Activated CD4-positive, alpha-beta T cell treated with anti-CD3 and anti-CD28 coated beads for 36 hours (primary cell): ENCODE measurements at regions of chr15 and their contacts with region 1.

Region 1: DNA sequence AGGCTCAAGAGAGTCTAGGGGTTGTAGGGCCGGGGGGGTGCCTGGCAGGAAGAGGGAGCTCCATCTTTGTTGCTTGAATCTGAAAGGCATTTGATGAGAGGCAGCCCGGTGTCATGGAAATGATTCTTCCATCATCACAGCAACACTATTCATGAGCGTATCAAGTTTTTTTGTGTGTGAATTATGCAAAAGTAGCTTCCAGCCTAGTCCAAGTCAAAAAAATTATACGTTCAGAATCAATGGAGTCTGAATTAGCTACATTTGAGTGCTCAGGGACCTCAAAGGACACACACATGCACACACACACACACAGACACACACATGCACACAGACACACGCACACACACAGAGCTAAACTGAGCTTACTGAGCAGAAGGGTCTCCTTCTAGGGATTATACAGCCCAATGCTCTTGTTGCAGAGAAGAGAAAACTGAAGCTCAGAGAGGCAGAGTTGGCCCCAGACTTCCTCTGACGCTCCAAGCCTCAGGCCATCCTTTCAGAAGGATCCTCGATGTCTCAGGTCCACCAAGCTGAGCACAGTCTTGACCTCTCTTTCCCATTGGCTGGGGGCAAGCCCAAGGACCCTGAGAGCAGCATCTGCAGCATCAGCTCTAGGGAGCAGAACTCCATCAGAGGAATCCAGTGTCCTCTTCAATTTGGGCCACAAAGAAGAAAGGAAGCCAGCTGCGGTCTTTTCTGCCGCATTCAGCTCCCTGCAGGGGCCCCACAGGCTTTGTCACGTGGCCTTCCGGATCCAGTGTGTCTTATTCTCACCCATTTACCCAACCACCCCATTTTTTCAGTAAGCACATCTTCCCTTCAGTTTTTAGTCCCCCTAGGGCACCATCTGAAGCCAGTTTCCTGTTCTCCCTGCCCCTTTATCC is 228.0 kb downstream of the UACA start:
- DNase-seq: peak; percentile 80
- ATAC-seq: peak; percentile 84
- H3K4me3 Mint-ChIP-seq: peak overlapping the region; percentile 79
- H3K27ac Mint-ChIP-seq: peak overlapping the region; percentile 92
- H3K4me1 Mint-ChIP-seq: peaks cover 48% of the 10 kb centered on the region
- H3K27me3 Mint-ChIP-seq: no peaks in the 10 kb centered on the region

Region 2: DNA sequence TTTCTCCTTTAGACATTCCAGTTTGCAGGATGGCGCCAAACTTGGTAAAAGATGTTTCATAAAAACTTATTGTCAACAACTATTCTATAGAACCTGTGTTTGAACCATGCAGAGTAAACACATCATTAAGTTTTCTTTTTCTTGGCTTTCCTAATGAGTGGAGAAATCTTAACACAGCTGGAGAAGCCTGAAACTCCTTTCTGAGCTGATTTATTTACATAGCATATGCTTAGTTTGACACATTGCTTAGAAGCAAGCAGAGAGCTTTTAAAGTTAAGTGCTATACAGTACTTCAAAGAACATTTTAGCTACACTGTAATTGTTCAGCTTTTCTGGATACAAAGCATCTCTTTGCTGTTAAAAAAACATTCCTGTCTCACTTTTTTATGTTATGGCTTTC is 1297.6 kb before region 1 on chr15:
- CTCF ChIA-PET with region 1: no interaction called
- POLR2A ChIA-PET with region 1: no interaction called
- intact Hi-C with region 1: no loop called
- DNase-seq: no peak
- ATAC-seq: no peak
- H3K4me3 Mint-ChIP-seq: no peak overlapping the region
- H3K27ac Mint-ChIP-seq: no peak overlapping the region
- H3K4me1 Mint-ChIP-seq: no peaks in the 10 kb centered on the region
- H3K27me3 Mint-ChIP-seq: no peaks in the 10 kb centered on the region

Region 3: GRCh38 chr15:70559265-70560239 is 24.2 kb after region 1 on chr15:
- CTCF ChIA-PET with region 1: interaction called, 4 read pairs
- POLR2A ChIA-PET with region 1: interaction called, 3 read pairs
- intact Hi-C with region 1: loop called in 1 of 2 experiments (anchors 2 kb)
- DNase-seq: peak; percentile 86
- ATAC-seq: peak; percentile 85
- H3K4me3 Mint-ChIP-seq: no peak overlapping the region
- H3K27ac Mint-ChIP-seq: no peak overlapping the region
- H3K4me1 Mint-ChIP-seq: peaks cover 14% of the 10 kb centered on the region
- H3K27me3 Mint-ChIP-seq: no peaks in the 10 kb centered on the region